ENCODE measurements at regions of chr14 and their contacts with region 1.

Region 1: DNA sequence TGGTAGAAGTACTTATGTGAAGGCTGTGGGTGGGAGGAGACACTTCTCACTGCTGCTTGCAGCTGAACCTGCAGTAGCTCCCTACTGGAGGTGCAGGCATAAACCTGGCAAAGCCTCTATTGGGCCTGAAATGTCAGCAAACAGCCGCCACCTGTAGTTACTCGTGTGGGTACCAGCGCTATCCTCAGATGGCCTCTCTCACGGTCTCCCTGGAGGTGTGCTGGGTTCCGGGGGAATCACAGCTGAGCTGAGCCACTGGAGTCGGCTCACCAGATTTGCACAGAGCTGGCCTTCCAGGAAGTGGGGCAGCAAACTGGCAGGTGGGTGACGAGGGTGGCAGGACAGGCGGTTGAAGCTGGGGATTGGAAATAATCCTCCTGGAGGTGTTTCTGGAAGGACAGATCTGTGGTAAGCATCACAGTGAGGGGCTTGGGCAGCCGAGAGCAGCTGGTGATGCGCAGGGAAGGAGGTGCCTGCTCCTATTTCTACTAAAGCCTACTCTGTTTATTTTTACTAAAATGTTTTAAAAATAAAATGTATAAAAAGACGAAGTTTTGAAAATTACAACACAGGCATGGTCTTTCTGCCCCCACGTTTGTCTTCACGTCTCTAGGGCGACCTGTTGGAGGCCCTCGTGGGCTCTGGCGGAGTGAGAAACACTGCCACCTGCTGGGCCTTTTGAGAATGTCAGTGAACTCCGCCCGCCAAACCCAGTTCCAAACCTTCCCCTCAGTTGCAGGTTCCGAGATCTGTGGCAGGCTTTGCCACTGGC is 67.8 kb upstream of the PLEKHG3 start:
- DNase-seq: peak; percentile 75
- H3K4me3 Mint-ChIP-seq: no peak overlapping the region
- H3K27ac Mint-ChIP-seq: no peak overlapping the region
- H3K4me1 Mint-ChIP-seq: peaks cover 4% of the 10 kb centered on the region
- H3K27me3 Mint-ChIP-seq: peaks cover 23% of the 10 kb centered on the region

Region 2: DNA sequence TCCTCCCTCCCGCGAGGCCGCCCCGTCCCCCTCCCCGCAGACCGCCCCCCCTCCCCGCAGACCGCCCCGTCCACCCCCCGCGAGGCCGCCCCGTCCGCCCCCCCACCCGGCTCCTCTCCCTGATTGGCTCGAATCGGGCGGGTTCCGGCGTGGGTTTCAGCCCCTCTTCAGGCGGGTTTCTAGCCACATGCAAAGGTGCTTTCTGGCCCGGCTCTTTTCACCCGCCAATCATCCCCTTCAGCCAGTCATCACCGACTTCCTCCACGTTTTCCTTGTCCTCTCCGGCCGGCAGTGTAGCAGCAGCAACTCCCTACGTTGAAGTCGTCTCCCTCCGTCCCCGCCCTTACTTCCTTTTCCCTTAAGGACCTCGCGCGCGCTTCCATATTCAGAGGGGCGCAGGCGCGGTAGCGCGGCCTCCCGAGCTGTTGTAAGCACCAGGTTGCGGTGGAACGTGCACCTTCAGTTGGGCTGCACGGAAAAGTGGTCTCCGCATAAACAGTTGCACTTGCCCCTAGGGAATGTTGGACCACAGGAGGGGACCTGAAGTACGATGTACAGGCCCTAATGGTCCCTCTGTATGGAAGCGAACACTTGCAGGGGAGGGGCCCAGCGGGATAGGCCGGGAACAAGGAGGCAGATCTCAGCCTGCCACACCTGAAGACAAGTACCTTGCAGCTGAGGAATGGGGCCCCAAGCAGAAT is 297.6 kb before region 1 on chr14:
- CTCF ChIA-PET with region 1: interaction called, 33 read pairs
- DNase-seq: peak; percentile 94
- H3K4me3 Mint-ChIP-seq: peak overlapping the region; percentile 78
- H3K27ac Mint-ChIP-seq: peak overlapping the region; percentile 90
- H3K4me1 Mint-ChIP-seq: peaks cover 38% of the 10 kb centered on the region
- H3K27me3 Mint-ChIP-seq: peaks cover 4% of the 10 kb centered on the region

Region 3: DNA sequence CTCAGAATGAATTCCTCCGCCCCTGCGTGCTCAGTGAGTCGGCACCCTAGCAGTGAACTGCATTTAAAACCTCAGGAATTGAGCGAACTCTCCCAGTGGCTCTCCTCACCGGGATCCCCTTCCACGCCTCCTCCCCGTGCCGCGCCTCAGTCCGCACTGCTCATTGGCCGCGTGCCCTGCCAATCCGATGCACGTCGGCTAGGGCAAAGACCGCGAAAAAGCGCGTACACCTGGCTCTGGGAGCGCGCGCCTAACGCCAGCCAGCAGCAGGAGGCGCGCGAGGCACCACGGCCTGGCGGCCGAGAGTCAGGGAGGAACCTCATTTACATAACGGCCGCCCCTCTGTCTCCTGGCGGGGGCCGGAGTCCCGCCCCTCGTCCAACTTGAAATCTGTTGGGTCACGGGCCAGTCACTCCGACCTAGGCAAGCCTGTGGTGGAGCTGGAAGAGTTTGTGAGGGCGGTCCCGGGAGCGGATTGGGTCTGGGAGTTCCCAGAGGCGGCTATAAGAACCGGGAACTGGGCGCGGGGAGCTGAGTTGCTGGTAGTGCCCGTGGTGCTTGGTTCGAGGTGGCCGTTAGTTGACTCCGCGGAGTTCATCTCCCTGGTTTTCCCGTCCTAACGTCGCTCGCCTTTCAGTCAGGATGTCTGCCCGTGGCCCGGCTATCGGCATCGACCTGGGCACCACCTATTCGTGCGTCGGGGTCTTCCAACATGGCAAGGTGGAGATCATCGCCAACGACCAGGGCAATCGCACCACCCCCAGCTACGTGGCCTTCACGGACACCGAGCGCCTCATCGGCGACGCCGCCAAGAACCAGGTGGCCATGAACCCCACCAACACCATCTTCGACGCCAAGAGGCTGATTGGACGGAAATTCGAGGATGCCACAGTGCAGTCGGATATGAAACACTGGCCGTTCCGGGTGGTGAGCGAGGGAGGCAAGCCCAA is 95.9 kb before region 1 on chr14 and contains the start of gene HSPA2:
- CTCF ChIA-PET with region 1: interaction called, 10 read pairs
- DNase-seq: peak; percentile 97
- H3K4me3 Mint-ChIP-seq: peak within 1 kb of the TSS; percentile 91
- H3K27ac Mint-ChIP-seq: peak within 1 kb of the TSS; percentile 89
- H3K4me1 Mint-ChIP-seq: peaks cover 33% of the 10 kb centered on the region
- H3K27me3 Mint-ChIP-seq: peaks cover 57% of the 10 kb centered on the region

Region 4: DNA sequence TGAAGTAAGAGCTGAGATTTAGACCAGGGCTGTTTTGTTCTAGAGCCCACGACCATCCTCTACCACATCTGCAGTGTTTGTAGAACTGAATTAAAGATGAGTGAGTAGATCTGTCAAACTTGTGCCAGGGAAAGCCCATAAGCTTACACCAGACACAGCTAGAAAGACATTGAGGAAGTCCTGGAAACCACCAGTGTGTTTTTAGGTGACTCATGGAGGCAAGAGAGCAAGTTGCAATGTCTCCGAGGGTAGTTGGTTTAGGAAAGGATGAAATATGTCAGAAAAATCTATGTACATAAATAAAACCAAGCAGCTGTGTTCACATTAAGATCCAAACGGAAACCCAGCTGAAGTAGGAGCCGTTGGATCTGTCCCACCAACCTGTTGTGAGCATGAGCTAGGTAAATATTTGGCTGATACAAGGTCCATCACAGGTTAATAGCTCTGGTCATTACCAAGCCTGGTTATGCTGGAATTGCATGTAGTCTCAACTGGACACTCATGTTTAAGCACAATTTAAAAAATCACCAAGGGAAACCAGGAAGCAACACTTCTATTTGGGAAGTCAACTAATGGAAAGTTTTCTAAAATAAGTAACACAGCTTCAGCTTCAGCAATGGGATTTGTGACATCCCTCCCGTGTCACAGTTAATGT is 18.0 kb after region 1 on chr14:
- CTCF ChIA-PET with region 1: interaction called, 13 read pairs
- DNase-seq: no peak
- H3K4me3 Mint-ChIP-seq: no peak overlapping the region
- H3K27ac Mint-ChIP-seq: no peak overlapping the region
- H3K4me1 Mint-ChIP-seq: peaks cover 16% of the 10 kb centered on the region
- H3K27me3 Mint-ChIP-seq: peaks cover 48% of the 10 kb centered on the region